ENCODE measurements at regions of chr7 and their contacts with region 1.

Region 1: DNA sequence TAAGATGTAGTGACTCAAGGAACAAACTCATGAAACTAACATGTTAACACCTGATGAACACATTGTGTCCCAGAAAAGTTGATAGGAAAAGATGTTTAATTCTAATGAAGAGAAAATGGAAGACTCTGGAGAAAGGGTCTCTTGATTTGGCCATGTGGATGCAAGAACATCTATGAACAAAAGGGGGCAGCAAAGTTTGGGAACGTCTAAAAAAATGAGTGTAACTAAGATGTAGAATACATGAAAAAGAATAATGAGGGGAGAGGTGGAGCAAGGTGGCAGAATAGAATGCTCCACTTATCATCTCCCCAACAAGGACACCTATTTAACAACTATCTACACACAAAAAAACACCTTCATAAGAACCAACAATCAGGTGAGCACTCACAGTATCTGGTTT is 805.1 kb downstream of the TNS3 start:
- ATAC-seq: no peak
- H3K4me3 ChIP-seq: no peak overlapping the region
- H3K27ac ChIP-seq: no peak overlapping the region
- H3K4me1 ChIP-seq: no peaks in the 10 kb centered on the region

Region 2: GRCh38 chr7:45574521-45575500 is 1202.0 kb before region 1 on chr7:
- in situ Hi-C with region 1: no loop called
- ATAC-seq: peak; percentile 84 to 95 (median 90)
- H3K4me3 ChIP-seq: peak overlapping the region; percentile 45 to 82 (median 57)
- H3K27ac ChIP-seq: peak overlapping the region; percentile 40 to 59
- H3K4me1 ChIP-seq: peaks cover 13 to 16% of the 10 kb centered on the region in 2 donors

Region 3: DNA sequence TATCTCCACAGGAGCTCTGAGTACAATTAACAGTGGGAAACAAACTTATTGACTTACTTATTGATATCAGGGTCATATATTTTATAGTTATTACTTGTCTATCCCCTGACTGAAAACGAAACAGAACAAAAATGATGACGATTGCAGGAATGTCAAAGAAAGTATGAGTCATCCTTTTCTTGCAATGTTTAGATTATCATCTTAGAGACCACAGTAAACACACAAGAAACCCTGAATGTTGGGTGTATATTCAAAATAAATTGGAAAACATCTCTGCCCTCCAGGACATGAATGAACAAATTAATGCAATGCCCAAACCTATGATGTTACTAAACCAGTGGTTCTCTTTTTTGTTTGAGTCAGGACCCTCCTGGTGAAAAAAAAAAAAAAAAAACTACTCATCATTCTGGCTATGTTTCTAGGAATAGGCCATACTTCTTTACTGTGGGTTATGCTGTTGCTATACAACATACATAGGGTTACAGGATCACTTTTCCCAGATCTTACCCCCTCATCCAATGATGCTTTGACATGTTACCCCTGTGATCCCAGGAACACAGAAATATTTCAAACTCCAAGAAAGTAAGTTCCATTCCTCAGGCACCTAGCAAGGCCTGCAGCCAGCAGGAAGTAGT is 232.3 kb before region 1 on chr7:
- in situ Hi-C with region 1: no loop called
- ATAC-seq: peak in 6 of 8 experiments; percentile 27 to 97 (median 40)
- H3K4me3 ChIP-seq: no peak overlapping the region
- H3K27ac ChIP-seq: no peak overlapping the region
- H3K4me1 ChIP-seq: no peaks in the 10 kb centered on the region

Region 4: DNA sequence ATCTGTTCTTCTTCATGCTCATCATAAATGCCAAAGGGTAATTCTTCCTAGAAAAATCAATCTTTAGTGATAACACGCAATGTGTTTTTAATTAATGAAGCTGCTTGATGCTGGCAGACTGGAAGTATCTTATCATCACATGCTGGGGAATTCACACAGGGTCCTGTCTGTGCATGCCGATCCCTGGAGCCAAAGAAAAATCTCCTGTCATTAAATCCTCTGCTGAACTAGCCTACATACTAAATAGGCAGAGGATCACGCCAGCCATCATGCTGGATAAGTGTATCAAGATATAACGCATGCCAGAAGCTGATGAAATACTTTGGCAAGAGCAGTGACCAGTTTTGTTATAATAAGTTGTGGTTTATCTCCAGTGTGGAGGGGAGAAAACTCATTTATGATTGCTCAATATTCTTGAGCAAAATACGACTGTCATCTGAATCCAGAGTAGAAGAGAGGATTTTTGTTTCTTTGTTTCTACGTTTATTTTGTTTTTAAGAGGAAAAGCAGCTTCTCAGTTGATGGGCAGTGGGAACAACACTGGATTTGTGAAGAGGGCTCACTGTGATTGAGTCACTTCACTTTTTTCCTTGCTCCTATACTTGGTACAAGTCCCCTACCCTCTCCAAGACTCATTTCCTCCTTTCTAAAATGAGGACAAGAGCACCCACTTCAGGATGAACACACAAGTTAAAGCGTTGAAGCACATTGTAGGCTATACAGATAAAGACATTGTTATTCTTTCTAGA is 156.1 kb after region 1 on chr7:
- in situ Hi-C with region 1: no loop called
- ATAC-seq: peak in 7 of 8 experiments; percentile 59 to 100 (median 96)
- H3K4me3 ChIP-seq: no peak overlapping the region
- H3K27ac ChIP-seq: peak overlapping the region; percentile 68
- H3K4me1 ChIP-seq: peaks cover 8 to 16% of the 10 kb centered on the region in 2 donors

Region 5: DNA sequence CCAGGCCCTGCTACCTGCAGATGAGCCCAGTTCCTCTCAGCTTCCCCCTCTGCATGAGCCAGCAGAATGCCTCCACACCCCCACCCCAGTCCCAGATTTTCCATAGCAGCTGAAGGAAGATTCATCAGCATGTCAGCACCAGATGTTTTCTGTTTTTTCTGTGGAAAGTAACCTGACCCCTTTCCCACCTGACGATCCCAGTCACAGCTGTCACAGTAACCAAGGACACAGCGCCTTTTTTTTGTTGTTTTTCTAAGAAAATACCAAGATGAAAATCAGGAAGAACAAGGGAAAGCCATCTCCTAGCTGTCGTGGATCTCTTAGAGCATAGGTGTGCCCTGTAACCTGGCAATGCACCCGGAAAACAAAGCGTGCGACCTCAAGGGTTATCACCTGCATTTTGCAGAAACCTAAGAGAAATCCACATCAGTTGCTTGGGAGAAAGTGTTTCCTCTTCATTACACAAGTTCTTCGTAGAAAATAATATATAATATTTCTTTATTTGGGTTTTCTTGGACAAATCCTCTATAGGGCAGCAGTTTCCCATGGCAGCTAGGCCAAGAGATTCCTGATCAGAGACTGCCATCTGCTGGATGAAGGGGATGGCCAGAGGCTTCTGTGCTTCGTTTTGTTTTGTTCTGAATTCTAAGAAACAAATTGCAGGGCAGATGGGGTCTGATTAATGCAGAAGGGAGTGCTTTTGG is 403.2 kb after region 1 on chr7:
- in situ Hi-C with region 1: loop called in 1 of 9 experiments (anchors 25 kb)
- ATAC-seq: peak; percentile 78 to 95 (median 86)
- H3K4me3 ChIP-seq: no peak overlapping the region
- H3K27ac ChIP-seq: no peak overlapping the region
- H3K4me1 ChIP-seq: peaks cover 5 to 7% of the 10 kb centered on the region in 2 donors